ENCODE measurements at regions of chr10 and their contacts with region 1.

Region 1: DNA sequence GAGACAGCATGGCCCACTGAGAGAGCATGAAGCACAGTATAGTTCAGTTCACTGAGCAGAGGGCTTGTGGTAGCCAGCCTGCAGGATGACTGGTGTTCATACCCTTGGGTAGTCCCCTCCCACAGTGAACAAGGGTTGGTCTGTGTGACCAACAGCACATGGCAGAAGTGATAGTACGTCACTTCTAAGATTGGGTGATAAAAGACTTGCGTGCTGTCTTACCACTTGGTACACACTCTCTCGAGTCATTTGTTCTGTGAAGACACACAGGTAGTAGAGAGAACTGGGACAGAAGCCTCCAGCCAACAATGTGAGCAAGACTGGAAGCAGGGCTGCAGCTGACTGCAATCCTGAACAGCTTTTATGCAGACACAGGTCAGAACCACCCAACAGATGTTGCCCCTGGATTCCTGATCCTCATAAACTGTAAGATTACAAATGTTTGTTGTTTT is 14.6 kb downstream of the EPC1 start:
- DNase-seq: peak; percentile 91
- H3K4me3 Mint-ChIP-seq: peak overlapping the region; percentile 75
- H3K27ac Mint-ChIP-seq: peak overlapping the region; percentile 91
- H3K4me1 Mint-ChIP-seq: peaks cover 76% of the 10 kb centered on the region
- H3K27me3 Mint-ChIP-seq: no peaks in the 10 kb centered on the region

Region 2: GRCh38 chr10:32149252-32149955 is 182.9 kb before region 1 on chr10:
- intact Hi-C with region 1: loop called (anchors 2 kb)
- DNase-seq: peak; percentile 80
- H3K4me3 Mint-ChIP-seq: peak overlapping the region; percentile 76
- H3K27ac Mint-ChIP-seq: peak overlapping the region; percentile 94
- H3K4me1 Mint-ChIP-seq: peaks cover 34% of the 10 kb centered on the region
- H3K27me3 Mint-ChIP-seq: no peaks in the 10 kb centered on the region

Region 3: GRCh38 chr10:32256613-32257437 is 75.5 kb before region 1 on chr10:
- intact Hi-C with region 1: no loop called
- DNase-seq: peak; percentile 90
- H3K4me3 Mint-ChIP-seq: no peak overlapping the region
- H3K27ac Mint-ChIP-seq: no peak overlapping the region
- H3K4me1 Mint-ChIP-seq: peaks cover 18% of the 10 kb centered on the region
- H3K27me3 Mint-ChIP-seq: no peaks in the 10 kb centered on the region

Region 4: GRCh38 chr10:32279795-32280194 is 52.5 kb before region 1 on chr10:
- intact Hi-C with region 1: no loop called
- DNase-seq: no peak
- H3K4me3 Mint-ChIP-seq: no peak overlapping the region
- H3K27ac Mint-ChIP-seq: no peak overlapping the region
- H3K4me1 Mint-ChIP-seq: peaks cover 5% of the 10 kb centered on the region
- H3K27me3 Mint-ChIP-seq: no peaks in the 10 kb centered on the region

Region 5: DNA sequence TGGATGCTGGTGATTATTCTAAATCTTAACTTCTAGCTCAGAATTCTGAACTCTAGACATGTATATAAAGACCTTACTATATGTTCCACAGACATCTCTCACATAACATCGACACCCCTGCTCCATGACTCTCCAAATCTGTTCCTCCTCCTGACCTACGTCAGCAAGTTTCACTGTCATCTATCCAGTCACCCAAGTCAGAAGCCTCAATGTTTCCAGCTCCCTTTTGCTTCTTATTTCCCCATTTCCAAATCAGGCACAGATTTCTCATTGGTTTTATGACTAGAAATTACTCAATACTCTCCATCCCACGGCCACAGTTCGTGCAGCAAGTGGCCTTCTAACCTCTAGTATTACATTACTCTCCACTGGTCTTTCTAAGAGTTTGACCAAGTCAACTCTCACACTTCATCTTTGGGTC is 13.8 kb before region 1 on chr10:
- intact Hi-C with region 1: loop called (anchors 1 kb)
- DNase-seq: peak; percentile 62
- H3K4me3 Mint-ChIP-seq: peak overlapping the region; percentile 32
- H3K27ac Mint-ChIP-seq: peak overlapping the region; percentile 69
- H3K4me1 Mint-ChIP-seq: peaks cover 40% of the 10 kb centered on the region
- H3K27me3 Mint-ChIP-seq: no peaks in the 10 kb centered on the region

Measured in activated CD4-positive, alpha-beta T cell treated with anti-CD3 and anti-CD28 coated beads, Interleukin-2, amount 10 ng/mL, durations not matched to agents 24 days and 14 days (primary cell).